Endothelial cell of umbilical vein (primary cell): ENCODE measurements at regions of chr3 and their contacts with region 1.

Region 1: DNA sequence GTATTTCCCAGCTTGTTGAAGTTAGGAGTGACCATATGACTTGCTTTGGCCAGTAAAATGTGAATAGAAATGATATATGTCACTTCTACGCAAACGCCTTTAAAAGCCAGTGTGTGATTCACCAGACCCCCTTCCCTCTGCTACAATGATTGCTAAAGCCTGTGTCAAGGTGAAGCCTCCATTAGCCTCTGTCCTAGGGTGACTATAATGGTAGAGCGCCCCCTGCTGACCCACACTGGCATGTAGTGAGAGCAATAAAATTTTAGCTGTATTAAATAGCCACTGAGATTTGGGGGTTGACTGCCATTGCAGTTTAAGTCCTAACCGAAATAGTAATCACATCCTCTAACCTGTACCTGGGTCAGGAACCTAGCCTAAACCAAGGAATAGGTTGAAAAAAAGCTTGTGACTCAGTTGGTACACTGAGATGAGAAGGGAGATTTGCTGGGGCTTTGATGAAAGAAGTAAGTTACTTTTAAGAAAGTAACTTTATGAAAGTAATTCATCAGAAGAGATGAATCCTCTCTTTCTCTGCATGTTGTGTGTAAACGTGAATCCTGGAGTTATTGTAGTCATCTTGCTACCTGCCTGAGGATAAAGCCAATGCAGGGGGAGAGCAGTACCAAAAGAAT is 52.6 kb downstream of the GTF2E1 start:
- DNase-seq: peak; percentile 85
- H3K4me3 ChIP-seq: no peak overlapping the region
- H3K27ac ChIP-seq: no peak overlapping the region
- H3K4me1 ChIP-seq: peaks cover 34% of the 10 kb centered on the region
- H3K27me3 ChIP-seq: no peaks in the 10 kb centered on the region
- CTCF ChIP-seq: peak; percentile 77 to 79
- POLR2A ChIP-seq: no peak

Region 2: GRCh38 chr3:120245386-120245785 is 549.7 kb before region 1 on chr3:
- CTCF ChIA-PET with region 1: interaction called, 4 read pairs
- POLR2A ChIA-PET with region 1: no interaction called
- dilution Hi-C with region 1: no loop called
- intact Hi-C with region 1: loop called (anchors 1 kb)
- DNase-seq: no peak
- H3K4me3 ChIP-seq: no peak overlapping the region
- H3K27ac ChIP-seq: no peak overlapping the region
- H3K4me1 ChIP-seq: no peaks in the 10 kb centered on the region
- H3K27me3 ChIP-seq: peaks cover 10 to 21% of the 10 kb centered on the region in 2 experiments
- CTCF ChIP-seq: no peak
- POLR2A ChIP-seq: no peak

Region 3: DNA sequence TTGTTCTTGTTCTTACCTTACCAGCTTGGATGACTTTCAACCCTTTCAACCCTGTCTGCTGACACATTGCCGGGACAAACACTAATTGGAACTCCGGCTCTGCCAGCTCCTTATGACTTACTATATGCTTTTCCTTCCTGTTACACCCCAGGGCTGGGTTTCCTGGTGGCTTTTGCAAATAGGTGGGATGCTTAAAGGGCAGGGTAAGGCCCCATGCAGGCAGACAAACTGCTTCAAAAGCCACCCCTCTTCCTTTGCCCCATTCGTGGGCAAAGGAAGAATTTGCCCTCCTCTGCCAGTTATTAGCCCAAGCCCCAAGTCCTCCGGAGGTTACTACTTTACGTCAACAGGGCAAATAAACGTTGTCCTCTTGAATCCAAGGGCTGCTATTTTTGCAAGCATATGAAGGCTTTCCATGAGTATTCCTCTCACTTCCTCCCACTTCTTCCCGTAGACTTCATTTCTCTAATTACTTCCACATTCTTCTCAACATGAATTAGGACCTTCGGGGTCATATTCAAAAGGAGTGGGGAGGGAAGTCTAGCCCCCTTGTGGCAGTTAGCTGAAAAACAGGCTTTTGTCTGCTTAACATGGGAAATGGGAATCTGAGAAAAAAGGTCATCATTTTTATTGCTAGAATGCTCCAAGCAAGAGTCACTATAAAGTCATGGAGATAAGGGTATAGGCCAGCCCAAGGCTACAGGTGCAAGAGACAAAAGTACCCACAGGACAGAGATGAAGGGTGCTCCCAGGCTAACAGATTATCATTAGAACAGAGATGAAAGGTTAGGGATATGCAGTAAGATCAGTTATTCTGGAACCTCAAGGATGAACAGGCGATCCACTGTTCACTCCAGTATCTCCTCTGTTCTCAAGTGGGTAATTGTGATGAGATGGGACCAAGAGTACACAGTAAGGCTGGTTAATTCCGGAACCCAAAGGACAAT is 288.0 kb before region 1 on chr3:
- CTCF ChIA-PET with region 1: no interaction called
- POLR2A ChIA-PET with region 1: no interaction called
- dilution Hi-C with region 1: no loop called
- intact Hi-C with region 1: loop called (anchors 2 kb)
- DNase-seq: peak; percentile 74
- H3K4me3 ChIP-seq: no peak overlapping the region
- H3K27ac ChIP-seq: peak overlapping the region; percentile 15
- H3K4me1 ChIP-seq: peaks cover 17% of the 10 kb centered on the region
- H3K27me3 ChIP-seq: no peaks in the 10 kb centered on the region
- CTCF ChIP-seq: peak; percentile 71 to 74
- POLR2A ChIP-seq: no peak

Region 4: GRCh38 chr3:120601554-120601953 is 193.6 kb before region 1 on chr3:
- CTCF ChIA-PET with region 1: interaction called, 39 read pairs
- POLR2A ChIA-PET with region 1: no interaction called
- dilution Hi-C with region 1: no loop called
- intact Hi-C with region 1: loop called (anchors 1 kb)
- DNase-seq: no peak
- H3K4me3 ChIP-seq: no peak overlapping the region
- H3K27ac ChIP-seq: no peak overlapping the region
- H3K4me1 ChIP-seq: peaks cover 6% of the 10 kb centered on the region
- H3K27me3 ChIP-seq: no peaks in the 10 kb centered on the region
- CTCF ChIP-seq: no peak
- POLR2A ChIP-seq: no peak

Region 5: GRCh38 chr3:120678331-120678947 is 116.7 kb before region 1 on chr3:
- CTCF ChIA-PET with region 1: interaction called, 23 read pairs
- POLR2A ChIA-PET with region 1: interaction called, 5 read pairs
- dilution Hi-C with region 1: no loop called
- intact Hi-C with region 1: loop called (anchors 1 kb)
- DNase-seq: peak; percentile 95
- H3K4me3 ChIP-seq: peak overlapping the region in 1 of 3 experiments; percentile 36
- H3K27ac ChIP-seq: peak overlapping the region; percentile 63
- H3K4me1 ChIP-seq: peaks cover 21% of the 10 kb centered on the region
- H3K27me3 ChIP-seq: no peaks in the 10 kb centered on the region
- CTCF ChIP-seq: no peak
- POLR2A ChIP-seq: peak; percentile 60

Region 6: DNA sequence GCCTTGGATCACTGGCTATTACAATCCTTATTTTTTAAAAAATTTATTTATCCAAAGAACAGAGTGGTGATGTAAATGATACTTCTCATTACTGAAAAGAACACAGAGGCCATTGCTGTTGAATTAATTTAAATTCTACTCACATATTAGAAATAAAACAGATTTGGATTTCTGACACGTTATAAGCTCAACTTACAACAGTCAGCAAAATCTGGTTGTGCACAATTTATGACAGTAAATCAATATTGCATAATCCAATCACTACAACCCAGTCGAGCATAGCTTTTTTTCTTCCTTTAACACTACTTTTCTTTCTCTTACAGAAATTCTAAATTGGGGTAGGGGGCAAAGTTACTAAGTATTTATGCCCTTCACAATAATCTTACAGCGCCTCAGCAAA is 95.8 kb before region 1 on chr3:
- CTCF ChIA-PET with region 1: interaction called, 26 read pairs
- POLR2A ChIA-PET with region 1: no interaction called
- dilution Hi-C with region 1: no loop called
- intact Hi-C with region 1: no loop called
- DNase-seq: no peak
- H3K4me3 ChIP-seq: no peak overlapping the region
- H3K27ac ChIP-seq: no peak overlapping the region
- H3K4me1 ChIP-seq: no peaks in the 10 kb centered on the region
- H3K27me3 ChIP-seq: no peaks in the 10 kb centered on the region
- CTCF ChIP-seq: no peak
- POLR2A ChIP-seq: no peak

Region 7: DNA sequence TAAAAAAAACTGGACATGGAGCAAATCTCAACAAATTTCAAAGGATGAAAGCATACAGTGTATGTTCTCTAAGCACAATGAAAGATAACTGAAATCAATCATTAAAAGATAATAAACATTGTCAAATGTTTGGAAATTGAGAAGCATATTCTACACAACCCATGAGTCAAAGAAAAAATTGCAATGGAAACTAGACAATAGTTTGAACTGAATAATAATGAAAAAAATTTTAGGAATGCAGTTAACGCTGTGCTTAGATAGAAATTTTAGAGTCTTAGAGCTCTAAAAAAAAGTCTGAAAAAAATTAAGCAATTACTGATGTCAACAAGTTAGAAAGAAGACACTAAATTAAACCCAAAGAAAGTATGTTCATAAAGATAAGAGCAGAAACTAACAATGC is 68.3 kb before region 1 on chr3:
- CTCF ChIA-PET with region 1: no interaction called
- POLR2A ChIA-PET with region 1: no interaction called
- dilution Hi-C with region 1: no loop called
- intact Hi-C with region 1: no loop called
- DNase-seq: no peak
- H3K4me3 ChIP-seq: no peak overlapping the region
- H3K27ac ChIP-seq: no peak overlapping the region
- H3K4me1 ChIP-seq: no peaks in the 10 kb centered on the region
- H3K27me3 ChIP-seq: no peaks in the 10 kb centered on the region
- CTCF ChIP-seq: no peak
- POLR2A ChIP-seq: no peak

Region 8: DNA sequence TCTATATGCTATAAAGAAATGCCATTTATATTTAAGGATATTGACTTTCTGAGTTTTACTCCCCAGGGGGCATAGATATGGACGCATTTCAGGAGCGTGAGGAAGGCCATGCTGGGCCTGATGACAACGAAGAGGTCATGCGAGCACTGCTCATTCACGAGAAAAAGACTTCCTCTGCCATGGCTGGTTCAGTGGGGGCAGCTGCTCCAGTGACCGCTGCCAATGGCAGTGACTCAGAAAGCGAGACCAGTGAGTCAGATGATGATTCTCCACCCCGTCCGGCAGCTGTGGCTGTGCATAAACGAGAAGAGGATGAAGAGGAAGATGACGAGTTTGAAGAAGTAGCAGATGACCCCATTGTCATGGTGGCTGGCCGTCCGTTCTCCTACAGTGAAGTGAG is 14.2 kb before region 1 on chr3:
- CTCF ChIA-PET with region 1: interaction called, 23 read pairs
- POLR2A ChIA-PET with region 1: no interaction called
- dilution Hi-C with region 1: no loop called
- intact Hi-C with region 1: loop called (anchors 1 kb)
- DNase-seq: peak; percentile 90
- H3K4me3 ChIP-seq: no peak overlapping the region
- H3K27ac ChIP-seq: peak overlapping the region; percentile 78
- H3K4me1 ChIP-seq: peaks cover 22% of the 10 kb centered on the region
- H3K27me3 ChIP-seq: no peaks in the 10 kb centered on the region
- CTCF ChIP-seq: no peak
- POLR2A ChIP-seq: no peak